ENCODE measurements at regions of chr18 and their contacts with region 1.

Region 1: GRCh38 chr18:46723856-46724415 is 32.9 kb downstream of the ST8SIA5 start:
- DNase-seq: peak; percentile 45
- H3K4me3 ChIP-seq: no peak overlapping the region
- H3K27ac ChIP-seq: peak overlapping the region; percentile 97
- H3K4me1 ChIP-seq: peaks cover 39% of the 10 kb centered on the region
- H3K27me3 ChIP-seq: no peaks in the 10 kb centered on the region
- CTCF ChIP-seq: no peak

Region 2: DNA sequence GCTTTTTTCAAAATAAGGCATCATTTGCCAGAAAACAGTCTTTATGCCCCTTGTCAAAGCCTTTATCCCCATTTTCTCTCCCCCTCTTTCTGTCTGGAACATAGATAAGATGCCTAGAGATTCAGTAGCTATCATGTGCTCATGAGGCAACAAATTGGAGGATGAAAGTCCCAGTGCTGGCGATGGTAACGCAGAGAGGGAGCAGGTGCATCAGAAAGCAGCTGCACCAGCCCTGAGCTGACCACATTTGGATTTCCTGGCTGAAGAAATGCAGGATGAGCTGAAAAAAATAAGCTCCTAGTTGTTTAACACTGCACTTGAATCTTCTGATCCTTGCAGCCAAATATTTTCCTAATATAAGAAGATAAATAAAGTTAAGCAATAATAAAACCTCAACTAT is 114.9 kb before region 1 on chr18:
- CTCF ChIA-PET with region 1: no interaction called
- POLR2A ChIA-PET with region 1: no interaction called
- intact Hi-C with region 1: loop called (anchors 5 kb)
- DNase-seq: no peak
- H3K4me3 ChIP-seq: no peak overlapping the region
- H3K27ac ChIP-seq: peak overlapping the region; percentile 70
- H3K4me1 ChIP-seq: peaks cover 5% of the 10 kb centered on the region
- H3K27me3 ChIP-seq: no peaks in the 10 kb centered on the region
- CTCF ChIP-seq: no peak

Measured in A673 (cell line).